Left ventricle myocardium inferior (tissue), 1 donor: ENCODE measurements at regions of chr14 and their contacts with region 1.

Region 1: DNA sequence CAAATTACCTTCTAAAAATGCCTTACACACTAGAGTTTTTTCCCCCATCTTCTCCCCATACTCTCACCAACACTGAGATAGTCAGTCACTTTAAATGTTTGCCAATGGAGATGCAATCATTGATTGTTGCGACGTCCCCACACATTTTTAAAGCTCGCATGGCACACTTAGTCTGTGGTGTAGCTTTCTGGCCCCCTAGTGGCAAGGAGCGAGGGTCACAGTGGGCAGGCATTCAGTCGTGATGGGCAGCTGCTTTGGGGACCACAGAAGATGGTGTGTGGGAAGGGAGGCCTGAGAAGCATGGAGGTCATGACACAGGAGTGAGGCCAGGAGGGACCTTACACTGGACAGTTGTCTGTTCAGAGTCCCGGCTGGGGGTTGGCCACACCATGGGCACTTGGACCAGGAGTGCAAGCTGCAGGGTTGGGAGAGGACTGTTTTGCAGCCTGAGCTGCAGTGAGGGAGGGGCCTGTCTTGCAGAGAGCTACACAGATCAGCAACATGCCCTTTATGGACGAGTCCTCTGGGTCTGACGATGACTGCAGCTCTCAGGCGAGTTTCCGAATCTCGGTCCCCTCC is 28.7 kb downstream of the PIGH start:
- DNase-seq: peak; percentile 51
- H3K4me3 ChIP-seq: no peak overlapping the region
- H3K27ac ChIP-seq: no peak overlapping the region
- H3K4me1 ChIP-seq: no peaks in the 10 kb centered on the region
- H3K27me3 ChIP-seq: no peaks in the 10 kb centered on the region
- CTCF ChIP-seq: peak; percentile 85

Region 2: GRCh38 chr14:67426983-67427606 is 144.3 kb before region 1 on chr14:
- intact Hi-C with region 1: loop called (anchors 5 kb)
- DNase-seq: peak; percentile 62
- H3K4me3 ChIP-seq: no peak overlapping the region
- H3K27ac ChIP-seq: no peak overlapping the region
- H3K4me1 ChIP-seq: peaks cover 19% of the 10 kb centered on the region
- H3K27me3 ChIP-seq: peaks cover 6% of the 10 kb centered on the region
- CTCF ChIP-seq: peak; percentile 82

Region 3: DNA sequence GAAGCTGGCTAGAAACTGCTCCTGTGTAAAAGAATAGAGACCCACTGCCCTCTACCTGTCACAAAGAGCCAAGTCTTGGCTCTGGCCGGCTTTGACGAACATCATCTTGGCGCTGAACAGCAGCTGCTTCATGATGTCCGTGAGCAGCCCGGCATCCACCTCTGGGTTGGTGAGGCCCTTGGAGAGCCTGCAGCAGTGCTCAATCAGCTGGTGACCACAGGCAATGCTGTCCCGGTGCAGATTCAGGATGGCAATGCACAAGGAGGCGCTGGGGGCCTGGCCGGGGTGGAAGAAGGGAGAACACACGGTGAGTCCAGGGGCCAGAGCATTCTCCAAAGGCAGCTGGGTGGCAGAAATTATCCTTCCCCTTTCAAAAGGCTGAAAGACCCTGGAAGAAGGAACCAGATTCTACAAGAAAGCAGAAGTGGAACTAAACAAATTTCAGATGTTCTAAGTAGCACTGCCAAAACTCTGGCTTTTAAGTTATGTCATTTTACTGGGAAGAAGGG is 194.9 kb after region 1 on chr14:
- intact Hi-C with region 1: no loop called
- DNase-seq: no peak
- H3K4me3 ChIP-seq: no peak overlapping the region
- H3K27ac ChIP-seq: no peak overlapping the region
- H3K4me1 ChIP-seq: peaks cover 15% of the 10 kb centered on the region
- H3K27me3 ChIP-seq: no peaks in the 10 kb centered on the region
- CTCF ChIP-seq: no peak